Dorsolateral prefrontal cortex (tissue), 120 donors: ENCODE measurements at regions of chr16 and their contacts with region 1.

Region 1: GRCh38 chr16:50065624-50066481 is at the start of gene HEATR3:
- DNase-seq: peak; percentile 82 to 94 (median 90)
- H3K4me3 ChIP-seq: peak within 1 kb of the TSS; percentile 67 to 100 (median 97)
- H3K27ac ChIP-seq: peak within 1 kb of the TSS; percentile 68 to 100 (median 98)
- H3K27me3 ChIP-seq: no peaks in the 10 kb centered on the region
- CTCF ChIP-seq: peak in 26 of 56 donors; percentile 2 to 40 (median 16)
- total RNA-seq, gene HEATR3: 11.3 to 36.1 (median 20.5) TPM

Region 2: GRCh38 chr16:50015631-50016030 is 50.2 kb before region 1 on chr16:
- intact Hi-C with region 1: no loop called
- DNase-seq: no peak
- H3K4me3 ChIP-seq: no peak overlapping the region
- H3K27ac ChIP-seq: no peak overlapping the region
- H3K27me3 ChIP-seq: no peaks in the 10 kb centered on the region
- CTCF ChIP-seq: no peak

Region 3: GRCh38 chr16:50152807-50153452 is 87.1 kb after region 1 on chr16 and contains the start of gene TENT4B:
- intact Hi-C with region 1: loop called (anchors 2 to 5 kb)
- DNase-seq: peak; percentile 67 to 90 (median 79)
- H3K4me3 ChIP-seq: peak within 1 kb of the TSS; percentile 78 to 97 (median 90)
- H3K27ac ChIP-seq: peak within 1 kb of the TSS; percentile 80 to 98 (median 94)
- H3K27me3 ChIP-seq: no peaks in the 10 kb centered on the region
- CTCF ChIP-seq: peak in 9 of 56 donors; percentile 6 to 42 (median 10)
- total RNA-seq, gene TENT4B: 9.9 to 37.1 (median 18.3) TPM